MCF 10A (cell line): ENCODE measurements at regions of chr10 and their contacts with region 1.

Region 1: DNA sequence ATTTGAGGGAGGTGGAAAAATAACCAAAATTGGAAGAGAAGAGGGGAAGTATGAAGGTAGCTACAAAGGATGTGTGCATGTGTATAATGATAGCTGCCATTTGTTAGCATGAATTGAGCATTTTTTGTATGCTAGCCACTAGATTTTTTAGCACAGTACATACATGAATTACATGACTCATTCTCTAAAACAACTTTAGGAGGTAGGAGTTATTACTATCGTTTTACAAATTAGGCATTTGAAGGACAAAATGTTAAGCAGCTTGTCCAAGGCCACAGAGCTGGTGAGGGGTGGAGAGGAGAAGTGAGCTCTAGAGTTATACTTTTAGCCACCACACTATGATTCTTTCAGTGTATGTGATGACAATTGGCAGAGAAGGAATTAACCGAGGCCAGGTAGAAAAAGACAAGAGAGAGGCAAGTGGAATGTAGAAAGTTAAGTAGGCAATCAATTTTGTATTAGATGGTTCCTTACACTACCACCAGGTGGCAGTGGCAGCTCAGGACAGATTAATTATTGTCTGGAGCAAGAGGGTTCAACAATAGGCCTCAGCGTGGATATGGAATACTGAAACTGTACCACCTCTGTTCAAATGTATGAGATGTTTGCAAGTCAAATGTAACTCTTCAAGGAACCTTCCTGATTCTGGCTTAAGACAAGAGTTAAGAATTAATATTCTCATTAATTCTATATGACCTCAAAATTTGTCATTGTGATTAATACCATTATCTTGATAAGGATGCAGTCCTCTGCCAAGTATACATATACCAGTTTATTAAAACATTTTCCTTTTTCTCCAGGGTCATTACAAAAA is 128.0 kb downstream of the MBL2 start:
- DNase-seq: peak; percentile 72
- H3K4me3 Mint-ChIP-seq: no peak overlapping the region
- H3K27ac Mint-ChIP-seq: no peak overlapping the region
- H3K4me1 Mint-ChIP-seq: no peaks in the 10 kb centered on the region
- H3K27me3 Mint-ChIP-seq: peaks cover 24% of the 10 kb centered on the region
- CTCF ChIP-seq: peak; percentile 77

Region 2: GRCh38 chr10:52258799-52259425 is 385.7 kb before region 1 on chr10:
- CTCF ChIA-PET with region 1: no interaction called
- POLR2A ChIA-PET with region 1: no interaction called
- intact Hi-C with region 1: no loop called
- DNase-seq: no peak
- H3K4me3 Mint-ChIP-seq: no peak overlapping the region
- H3K27ac Mint-ChIP-seq: no peak overlapping the region
- H3K4me1 Mint-ChIP-seq: peaks cover 18% of the 10 kb centered on the region
- H3K27me3 Mint-ChIP-seq: no peaks in the 10 kb centered on the region
- CTCF ChIP-seq: no peak

Region 3: GRCh38 chr10:52308251-52309031 is 336.1 kb before region 1 on chr10:
- CTCF ChIA-PET with region 1: interaction called, 3 read pairs
- POLR2A ChIA-PET with region 1: no interaction called
- intact Hi-C with region 1: loop called (anchors 1 kb)
- DNase-seq: peak; percentile 67
- H3K4me3 Mint-ChIP-seq: peak overlapping the region; percentile 65
- H3K27ac Mint-ChIP-seq: peak overlapping the region; percentile 43
- H3K4me1 Mint-ChIP-seq: peaks cover 12% of the 10 kb centered on the region
- H3K27me3 Mint-ChIP-seq: no peaks in the 10 kb centered on the region
- CTCF ChIP-seq: peak; percentile 78

Region 4: GRCh38 chr10:52551046-52551445 is 93.5 kb before region 1 on chr10:
- CTCF ChIA-PET with region 1: no interaction called
- POLR2A ChIA-PET with region 1: no interaction called
- intact Hi-C with region 1: no loop called
- DNase-seq: no peak
- H3K4me3 Mint-ChIP-seq: no peak overlapping the region
- H3K27ac Mint-ChIP-seq: no peak overlapping the region
- H3K4me1 Mint-ChIP-seq: no peaks in the 10 kb centered on the region
- H3K27me3 Mint-ChIP-seq: no peaks in the 10 kb centered on the region
- CTCF ChIP-seq: no peak

Region 5: DNA sequence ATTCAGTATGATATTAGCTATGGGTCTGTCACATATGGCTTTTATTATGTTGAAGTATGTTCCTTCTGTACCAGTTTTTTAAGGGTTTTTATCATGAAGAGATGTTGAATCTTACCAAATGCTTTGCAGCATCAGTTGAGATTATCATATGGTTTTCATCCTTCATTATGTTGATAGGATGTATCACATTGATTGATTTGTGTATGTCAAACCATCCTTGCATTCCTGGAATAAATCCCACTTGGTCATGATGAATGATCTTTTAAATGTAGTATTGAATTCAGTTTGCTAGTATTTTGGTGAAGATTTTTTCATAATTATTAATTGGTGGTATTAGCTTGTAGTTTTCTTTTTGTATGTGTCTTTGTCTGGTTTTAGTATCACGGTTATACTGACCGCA is 57.9 kb before region 1 on chr10:
- CTCF ChIA-PET with region 1: no interaction called
- POLR2A ChIA-PET with region 1: no interaction called
- intact Hi-C with region 1: no loop called
- DNase-seq: no peak
- H3K4me3 Mint-ChIP-seq: no peak overlapping the region
- H3K27ac Mint-ChIP-seq: no peak overlapping the region
- H3K4me1 Mint-ChIP-seq: no peaks in the 10 kb centered on the region
- H3K27me3 Mint-ChIP-seq: no peaks in the 10 kb centered on the region
- CTCF ChIP-seq: no peak

Region 6: GRCh38 chr10:52668024-52668423 is 23.4 kb after region 1 on chr10:
- CTCF ChIA-PET with region 1: interaction called, 12 read pairs
- POLR2A ChIA-PET with region 1: no interaction called
- intact Hi-C with region 1: no loop called
- DNase-seq: no peak
- H3K4me3 Mint-ChIP-seq: no peak overlapping the region
- H3K27ac Mint-ChIP-seq: no peak overlapping the region
- H3K4me1 Mint-ChIP-seq: no peaks in the 10 kb centered on the region
- H3K27me3 Mint-ChIP-seq: no peaks in the 10 kb centered on the region
- CTCF ChIP-seq: no peak

Region 7: GRCh38 chr10:52720018-52720417 is 75.4 kb after region 1 on chr10:
- CTCF ChIA-PET with region 1: interaction called, 28 read pairs
- POLR2A ChIA-PET with region 1: no interaction called
- intact Hi-C with region 1: no loop called
- DNase-seq: no peak
- H3K4me3 Mint-ChIP-seq: no peak overlapping the region
- H3K27ac Mint-ChIP-seq: no peak overlapping the region
- H3K4me1 Mint-ChIP-seq: no peaks in the 10 kb centered on the region
- H3K27me3 Mint-ChIP-seq: no peaks in the 10 kb centered on the region
- CTCF ChIP-seq: no peak

Region 8: GRCh38 chr10:52740913-52741675 is 96.5 kb after region 1 on chr10:
- CTCF ChIA-PET with region 1: interaction called, 31 read pairs
- POLR2A ChIA-PET with region 1: no interaction called
- intact Hi-C with region 1: no loop called
- DNase-seq: peak; percentile 64
- H3K4me3 Mint-ChIP-seq: no peak overlapping the region
- H3K27ac Mint-ChIP-seq: no peak overlapping the region
- H3K4me1 Mint-ChIP-seq: peaks cover 6% of the 10 kb centered on the region
- H3K27me3 Mint-ChIP-seq: no peaks in the 10 kb centered on the region
- CTCF ChIP-seq: peak; percentile 86

Region 9: GRCh38 chr10:52779541-52780390 is 135.2 kb after region 1 on chr10:
- CTCF ChIA-PET with region 1: interaction called, 116 read pairs
- POLR2A ChIA-PET with region 1: interaction called, 3 read pairs
- intact Hi-C with region 1: loop called (anchors 1 kb)
- DNase-seq: peak; percentile 70
- H3K4me3 Mint-ChIP-seq: no peak overlapping the region
- H3K27ac Mint-ChIP-seq: no peak overlapping the region
- H3K4me1 Mint-ChIP-seq: no peaks in the 10 kb centered on the region
- H3K27me3 Mint-ChIP-seq: no peaks in the 10 kb centered on the region
- CTCF ChIP-seq: peak; percentile 95